Tibial artery (tissue), 4 donors: ENCODE measurements at regions of chr2 and their contacts with region 1.

Region 1: DNA sequence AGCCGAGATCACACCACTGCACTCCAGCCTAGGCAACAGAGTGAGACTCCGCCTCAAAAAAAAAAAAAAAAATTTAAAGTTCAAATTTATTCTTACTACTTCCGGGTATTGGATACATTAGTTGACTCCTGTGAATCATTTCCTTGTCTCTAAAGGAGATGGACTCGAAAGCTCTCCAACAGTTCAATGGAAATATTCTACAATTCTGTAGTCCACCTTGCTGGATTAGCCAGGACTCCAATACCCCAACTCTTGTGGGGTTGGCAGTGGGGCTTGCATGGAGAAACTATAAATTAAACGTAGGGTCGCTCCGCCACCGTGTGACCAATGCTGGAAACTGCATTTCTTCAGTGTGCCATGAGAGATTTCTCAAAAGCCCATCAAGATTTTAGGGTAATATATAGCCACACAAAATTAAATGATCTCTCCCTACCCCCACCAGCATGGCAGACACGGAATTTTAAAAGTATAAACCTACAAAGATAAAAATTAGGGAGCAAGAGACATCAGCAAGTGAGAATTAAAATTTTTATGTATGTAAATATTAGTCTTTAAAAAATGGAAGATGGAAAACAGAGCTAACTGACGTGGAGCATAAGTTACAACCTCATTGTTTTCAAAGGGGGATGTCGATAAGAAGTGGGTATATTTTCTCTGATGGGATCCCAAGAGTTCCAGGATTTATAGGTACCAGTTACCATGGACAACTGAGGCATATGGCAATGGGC is 27.8 kb upstream of the GAREM2 start:
- DNase-seq: peak; percentile 59 to 68
- H3K4me3 ChIP-seq: no peak overlapping the region
- H3K27ac ChIP-seq: no peak overlapping the region
- H3K4me1 ChIP-seq: no peaks in the 10 kb centered on the region
- H3K27me3 ChIP-seq: peaks cover 0 to 2% of the 10 kb centered on the region in 2 donors
- CTCF ChIP-seq: peak; percentile 74 to 84

Region 2: DNA sequence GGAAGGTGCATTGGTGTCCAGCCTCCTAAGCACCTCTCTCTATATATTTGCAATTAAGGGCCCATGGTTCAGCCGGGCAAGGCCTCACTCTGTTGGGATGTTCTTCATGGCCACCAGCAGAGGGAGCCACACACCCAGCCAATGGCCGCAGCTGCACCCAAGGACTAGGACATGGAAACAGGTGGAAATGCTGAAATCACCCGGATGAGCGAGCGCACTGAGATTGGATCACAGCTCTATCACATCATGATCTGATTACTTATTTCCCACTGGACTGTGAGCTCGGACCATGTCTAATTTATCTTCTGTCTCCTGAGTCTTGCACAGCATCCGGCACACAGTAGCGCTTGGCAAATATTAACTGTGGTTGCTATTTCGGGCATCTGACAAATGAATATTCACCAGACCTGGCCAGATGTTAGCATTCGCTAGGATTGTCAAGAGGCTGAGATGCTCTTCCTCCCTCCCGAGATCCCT is 194.0 kb before region 1 on chr2:
- intact Hi-C with region 1: loop called (anchors 5 kb)
- DNase-seq: peak; percentile 42 to 79
- H3K4me3 ChIP-seq: no peak overlapping the region
- H3K27ac ChIP-seq: no peak overlapping the region
- H3K4me1 ChIP-seq: no peaks in the 10 kb centered on the region
- H3K27me3 ChIP-seq: no peaks in the 10 kb centered on the region
- CTCF ChIP-seq: peak; percentile 92

Region 3: DNA sequence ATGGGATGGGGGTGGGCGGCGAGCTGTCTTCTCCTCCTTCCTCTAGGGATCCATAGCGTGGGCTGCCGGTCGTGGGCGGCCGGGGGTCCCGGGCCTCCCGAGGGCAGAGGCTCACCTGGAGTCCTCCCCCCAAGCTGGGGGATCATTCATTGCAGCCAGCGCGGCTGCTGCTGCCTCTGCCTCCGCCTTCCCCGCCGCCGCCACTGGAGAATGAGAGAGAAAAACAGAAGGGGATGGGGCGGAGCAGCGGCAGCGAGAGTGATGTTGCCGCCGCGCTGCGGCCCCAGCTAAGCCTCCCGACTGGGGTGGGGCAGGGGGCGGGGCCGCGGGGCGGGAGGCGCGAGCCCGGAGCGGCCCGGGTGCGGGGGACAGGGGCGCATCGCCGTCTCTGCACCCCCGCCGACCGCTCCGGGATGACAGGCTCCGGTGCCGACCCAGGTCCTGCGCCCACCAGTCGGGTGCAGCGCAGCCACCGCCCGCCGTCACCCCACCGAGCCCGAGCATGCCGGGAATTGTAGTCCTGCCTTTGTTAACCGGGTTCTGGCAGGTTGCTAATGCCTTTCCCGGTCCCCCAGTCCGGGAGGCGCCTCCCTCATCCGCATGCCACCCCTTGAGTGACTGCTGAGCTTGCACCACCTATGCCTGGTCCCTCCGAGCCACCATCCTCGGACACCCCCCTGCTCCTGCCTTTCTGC is 162.7 kb before region 1 on chr2 and contains the start of gene KIF3C:
- intact Hi-C with region 1: loop called (anchors 10 kb)
- DNase-seq: peak; percentile 51 to 72
- H3K4me3 ChIP-seq: peak within 1 kb of the TSS; percentile 70 to 89
- H3K27ac ChIP-seq: peak within 1 kb of the TSS; percentile 60 to 75
- H3K4me1 ChIP-seq: peaks cover 0 to 29% (median 19%) of the 10 kb centered on the region in 4 donors
- H3K27me3 ChIP-seq: no peaks in the 10 kb centered on the region
- CTCF ChIP-seq: no peak

Region 4: GRCh38 chr2:26088032-26088643 is 57.0 kb before region 1 on chr2:
- intact Hi-C with region 1: no loop called
- DNase-seq: no peak
- H3K4me3 ChIP-seq: no peak overlapping the region
- H3K27ac ChIP-seq: no peak overlapping the region
- H3K4me1 ChIP-seq: peaks cover 0 to 5% (median 0%) of the 10 kb centered on the region in 4 donors
- H3K27me3 ChIP-seq: no peaks in the 10 kb centered on the region
- CTCF ChIP-seq: peak; percentile 42 to 59

Region 5: DNA sequence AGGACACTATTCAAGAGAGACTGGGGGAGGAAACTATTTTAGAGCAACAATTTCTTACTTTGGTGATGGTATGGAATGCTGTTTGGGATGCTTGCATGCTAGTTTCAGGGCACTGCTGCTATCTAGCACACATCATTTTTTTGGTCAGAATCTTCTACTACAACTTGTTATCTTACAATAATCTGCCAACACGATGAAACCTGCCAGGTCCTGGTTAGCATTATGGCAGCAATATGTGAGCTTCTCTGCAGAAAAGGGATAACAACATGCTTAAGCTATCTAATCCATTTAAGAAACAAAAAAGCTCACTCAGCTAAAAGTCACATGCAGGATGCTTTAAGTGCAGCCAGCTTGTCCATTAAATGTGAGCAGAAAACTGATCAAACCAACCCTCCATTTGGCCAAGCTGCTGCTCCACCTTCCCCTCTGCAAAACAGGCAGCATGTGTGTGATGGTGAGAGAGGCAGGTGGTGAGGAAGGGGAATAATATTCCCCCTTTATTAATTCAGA is 57.9 kb after region 1 on chr2:
- intact Hi-C with region 1: no loop called
- DNase-seq: no peak
- H3K4me3 ChIP-seq: no peak overlapping the region
- H3K27ac ChIP-seq: no peak overlapping the region
- H3K4me1 ChIP-seq: no peaks in the 10 kb centered on the region
- H3K27me3 ChIP-seq: no peaks in the 10 kb centered on the region
- CTCF ChIP-seq: no peak